ENCODE measurements at regions of chr1 and their contacts with region 1.

Region 1: GRCh38 chr1:66452162-66452561 is 81.8 kb upstream of the SGIP1 start:
- DNase-seq: no peak

Region 2: GRCh38 chr1:66069976-66070876 is 381.9 kb before region 1 on chr1:
- intact Hi-C with region 1: no loop called
- DNase-seq: no peak

Region 3: GRCh38 chr1:66396212-66396890 is 55.8 kb before region 1 on chr1:
- intact Hi-C with region 1: no loop called
- DNase-seq: peak in 1 of 10 donors; percentile 59

Region 4: DNA sequence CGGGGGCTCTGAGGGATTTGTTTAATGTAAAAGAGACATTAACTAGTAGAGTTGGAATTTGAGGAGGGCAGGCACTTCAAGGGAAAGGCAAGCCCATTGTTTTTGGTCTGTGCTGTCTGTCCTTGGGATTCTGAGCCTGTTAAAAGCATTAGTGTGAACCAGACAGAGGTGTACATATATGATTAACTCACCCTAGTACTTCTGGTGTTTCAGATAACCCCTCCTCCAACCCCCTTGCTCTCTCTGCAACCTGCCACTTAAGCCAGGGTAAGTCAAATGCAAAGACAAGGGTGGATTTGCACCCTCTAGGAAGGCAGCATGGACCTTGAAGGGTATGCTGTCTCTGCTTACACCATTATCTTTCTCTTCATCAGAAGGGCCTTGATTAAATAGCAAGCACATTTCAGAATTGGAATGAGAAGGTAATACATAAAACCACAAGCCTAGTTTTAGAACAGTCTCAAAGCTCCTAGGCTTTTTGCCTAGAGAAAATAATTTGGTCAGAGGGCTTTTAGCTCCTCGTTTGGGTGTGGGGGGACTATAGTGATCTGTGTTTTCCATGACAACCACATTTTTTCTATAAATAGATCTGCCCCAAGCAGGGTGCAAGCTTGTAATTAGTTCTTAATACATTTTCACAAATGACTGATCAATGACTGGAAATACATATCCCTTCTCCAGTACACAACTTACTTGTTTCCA is 38.9 kb before region 1 on chr1:
- intact Hi-C with region 1: no loop called
- DNase-seq: no peak

Region 5: GRCh38 chr1:66725885-66726665 is 273.9 kb after region 1 on chr1:
- intact Hi-C with region 1: loop called (anchors 10 kb)
- DNase-seq: peak in 5 of 10 donors; percentile 24 to 81 (median 36)

Region 6: DNA sequence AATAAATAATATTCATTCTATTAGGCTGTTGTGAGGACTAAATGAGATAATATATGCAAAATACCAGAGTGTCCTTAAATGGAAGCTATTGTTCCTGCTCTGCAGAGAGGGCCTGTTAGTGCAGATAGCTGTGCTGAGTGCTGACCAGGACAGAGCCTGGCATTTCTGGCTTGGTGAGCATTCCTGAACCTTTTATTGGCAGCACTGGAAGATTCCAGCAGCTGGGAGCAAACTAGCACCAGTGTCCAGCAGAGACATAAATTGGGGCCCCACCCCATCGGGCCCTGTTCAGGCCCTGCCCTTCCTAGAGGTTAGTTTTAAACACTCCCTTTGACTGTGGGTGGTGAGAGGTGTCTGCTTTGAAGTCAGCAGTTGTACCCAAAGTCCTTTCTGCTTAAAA is 1146.9 kb after region 1 on chr1:
- intact Hi-C with region 1: no loop called
- DNase-seq: no peak